Panc1 (cell line): ENCODE measurements at regions of chr6 and their contacts with region 1.

Region 1: GRCh38 chr6:42053601-42054000 is 3.3 kb downstream of the TAF8 start:
- DNase-seq: no peak
- ATAC-seq: no peak
- H3K4me3 ChIP-seq: no peak overlapping the region
- H3K27ac ChIP-seq: no peak overlapping the region
- H3K4me1 ChIP-seq: peaks cover 10% of the 10 kb centered on the region
- H3K27me3 ChIP-seq: no peaks in the 10 kb centered on the region
- CTCF ChIP-seq: no peak

Region 2: DNA sequence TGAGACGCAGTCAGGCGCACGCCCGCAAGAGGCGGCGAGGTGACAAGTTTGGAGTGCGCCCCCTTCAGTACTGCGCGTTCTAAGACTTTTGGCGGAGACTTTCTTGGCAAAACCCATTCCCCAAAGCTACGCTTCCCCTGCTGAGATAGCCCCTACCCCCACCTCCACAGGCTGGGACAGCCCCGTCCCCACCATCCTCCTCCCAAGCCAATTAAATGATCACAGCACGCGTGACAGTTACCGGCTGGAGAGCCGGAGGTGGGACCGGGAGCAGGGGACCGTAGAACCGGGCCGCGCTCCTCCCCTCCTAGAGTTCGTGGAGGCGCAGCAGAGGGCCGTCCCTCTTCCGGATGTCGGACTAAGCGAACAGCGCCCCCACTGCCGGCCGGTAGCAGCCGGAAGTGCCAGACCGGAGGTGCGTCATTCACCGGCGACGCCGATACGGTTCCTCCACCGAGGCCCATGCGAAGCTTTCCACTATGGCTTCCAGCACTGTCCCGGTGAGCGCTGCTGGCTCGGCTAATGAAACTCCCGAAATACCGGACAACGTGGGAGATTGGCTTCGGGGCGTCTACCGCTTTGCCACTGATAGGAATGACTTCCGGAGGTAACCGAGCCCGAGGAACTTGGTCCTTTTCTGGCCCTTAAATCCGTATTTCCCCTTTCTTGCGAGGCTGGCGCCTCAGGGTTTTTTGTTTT is 266.2 kb before region 1 on chr6 and contains the start of gene TOMM6:
- CTCF ChIA-PET with region 1: interaction called, 7 read pairs
- POLR2A ChIA-PET with region 1: interaction called, 10 read pairs
- in situ Hi-C with region 1: no loop called
- intact Hi-C with region 1: no loop called
- DNase-seq: peak; percentile 79
- ATAC-seq: peak; percentile 88
- H3K4me3 ChIP-seq: peak within 1 kb of the TSS; percentile 71 to 92
- H3K27ac ChIP-seq: peak within 1 kb of the TSS; percentile 92
- H3K4me1 ChIP-seq: peaks cover 7% of the 10 kb centered on the region; the same call in 1 of the 2 replicates
- H3K27me3 ChIP-seq: no peaks in the 10 kb centered on the region
- CTCF ChIP-seq: peak; percentile 94
- total RNA-seq, gene TOMM6: 234 TPM